ENCODE measurements at regions of chr5 and their contacts with region 1.

Region 1: DNA sequence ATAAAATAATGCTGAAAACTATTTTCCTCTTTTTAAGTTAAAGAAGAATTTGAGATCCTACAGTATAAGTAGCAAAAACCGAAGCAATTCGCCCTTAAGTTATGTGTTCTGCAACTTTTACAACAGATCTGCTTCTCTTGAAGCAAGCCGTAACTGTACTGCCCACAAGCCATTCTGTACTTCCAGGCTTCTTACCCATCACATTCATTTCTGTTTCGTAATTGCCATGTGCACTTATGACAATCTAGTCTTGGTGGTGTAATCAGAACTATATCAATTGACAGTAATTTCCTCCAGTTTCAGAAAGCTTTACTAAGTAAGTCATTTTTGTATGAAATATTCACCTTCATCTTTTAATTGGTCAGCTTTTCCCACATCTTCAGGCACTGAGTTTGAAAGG is 13.8 kb downstream of the SGTB start:
- DNase-seq: no peak
- H3K4me3 ChIP-seq: no peak overlapping the region
- H3K4me3 Mint-ChIP-seq: no peak overlapping the region
- H3K27ac ChIP-seq: no peak overlapping the region
- H3K27ac Mint-ChIP-seq: peak overlapping the region in 1 of 7 donors; percentile 31
- H3K4me1 ChIP-seq: peaks cover 6% of the 10 kb centered on the region
- H3K4me1 Mint-ChIP-seq: peaks cover 9 to 24% (median 17%) of the 10 kb centered on the region in 4 donors
- H3K27me3 ChIP-seq: no peaks in the 10 kb centered on the region
- H3K27me3 Mint-ChIP-seq: no peaks in the 10 kb centered on the region

Region 2: DNA sequence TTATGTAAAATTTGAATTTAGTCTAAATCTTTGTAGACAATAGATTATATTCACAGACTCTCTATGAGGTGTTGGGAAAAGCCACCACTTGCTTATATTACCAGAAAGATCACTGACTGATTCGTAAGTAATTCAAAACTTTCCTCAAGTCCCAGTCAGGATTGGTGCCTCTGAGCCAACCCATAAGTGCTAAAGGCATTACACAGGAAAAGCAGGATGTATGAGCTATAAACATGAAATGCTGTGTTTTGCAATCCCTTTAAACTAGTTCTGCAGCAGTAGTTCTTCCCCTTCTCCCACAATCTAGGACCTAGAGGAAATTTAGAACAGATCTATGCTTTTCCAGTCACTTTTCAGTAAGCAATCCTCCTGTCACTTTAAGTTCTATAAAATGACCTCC is 35.3 kb before region 1 on chr5:
- CTCF ChIA-PET with region 1: no interaction called
- POLR2A ChIA-PET with region 1: no interaction called
- intact Hi-C with region 1: loop called (anchors 5 kb)
- DNase-seq: no peak
- H3K4me3 ChIP-seq: no peak overlapping the region
- H3K4me3 Mint-ChIP-seq: no peak overlapping the region
- H3K27ac ChIP-seq: no peak overlapping the region
- H3K27ac Mint-ChIP-seq: peak overlapping the region in 3 of 7 donors; percentile 23 to 80 (median 67)
- H3K4me1 ChIP-seq: no peaks in the 10 kb centered on the region
- H3K4me1 Mint-ChIP-seq: peaks cover 13 to 26% (median 19%) of the 10 kb centered on the region in 4 donors
- H3K27me3 ChIP-seq: no peaks in the 10 kb centered on the region
- H3K27me3 Mint-ChIP-seq: no peaks in the 10 kb centered on the region

Region 3: GRCh38 chr5:65938256-65938655 is 230.1 kb after region 1 on chr5:
- CTCF ChIA-PET with region 1: no interaction called
- POLR2A ChIA-PET with region 1: no interaction called
- intact Hi-C with region 1: no loop called
- DNase-seq: no peak
- H3K4me3 ChIP-seq: no peak overlapping the region
- H3K4me3 Mint-ChIP-seq: peak overlapping the region in 1 of 8 donors; percentile 63
- H3K27ac ChIP-seq: no peak overlapping the region
- H3K27ac Mint-ChIP-seq: peak overlapping the region in 3 of 7 donors; percentile 45 to 73 (median 67)
- H3K4me1 ChIP-seq: peaks cover 61% of the 10 kb centered on the region
- H3K4me1 Mint-ChIP-seq: peaks cover 25 to 61% (median 46%) of the 10 kb centered on the region in 4 donors
- H3K27me3 ChIP-seq: no peaks in the 10 kb centered on the region
- H3K27me3 Mint-ChIP-seq: no peaks in the 10 kb centered on the region

Region 4: DNA sequence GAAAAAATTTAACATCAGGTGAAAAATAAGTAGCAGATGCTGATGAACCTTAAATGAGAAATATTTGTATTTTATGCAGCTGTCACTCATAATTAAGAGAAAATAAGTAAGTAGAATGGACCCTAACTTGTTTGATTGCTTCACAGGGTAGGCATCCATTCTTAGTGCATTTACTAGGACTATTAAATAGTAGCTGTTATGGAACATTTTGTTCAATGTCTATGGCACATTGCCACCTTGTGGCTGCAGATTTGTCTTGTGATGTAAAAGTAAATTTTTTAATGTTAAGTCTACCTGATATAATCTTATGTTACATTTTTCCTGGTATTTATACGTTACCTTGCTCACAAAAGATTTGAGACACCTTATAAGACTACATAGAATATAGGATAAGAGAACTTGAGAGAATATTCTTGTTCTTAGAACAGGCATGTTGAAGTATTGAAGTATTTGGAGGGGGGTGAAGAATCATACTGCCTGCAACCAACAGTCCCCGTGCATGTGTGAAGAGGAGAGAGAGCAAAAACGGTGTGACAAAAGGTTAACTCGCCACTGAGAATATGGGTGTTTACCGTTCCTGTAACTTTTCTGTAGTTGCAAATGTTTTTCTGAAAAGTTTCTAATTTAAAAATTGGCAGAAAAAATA is 1049.2 kb after region 1 on chr5:
- CTCF ChIA-PET with region 1: no interaction called
- POLR2A ChIA-PET with region 1: no interaction called
- intact Hi-C with region 1: no loop called
- DNase-seq: peak in 4 of 5 donors; percentile 4 to 14 (median 10)
- H3K4me3 ChIP-seq: no peak overlapping the region
- H3K4me3 Mint-ChIP-seq: no peak overlapping the region
- H3K27ac ChIP-seq: no peak overlapping the region
- H3K27ac Mint-ChIP-seq: no peak overlapping the region
- H3K4me1 ChIP-seq: no peaks in the 10 kb centered on the region
- H3K4me1 Mint-ChIP-seq: no peaks in the 10 kb centered on the region
- H3K27me3 ChIP-seq: no peaks in the 10 kb centered on the region
- H3K27me3 Mint-ChIP-seq: peaks cover 5 to 12% of the 10 kb centered on the region in 2 donors